BJ (cell line): ENCODE measurements at regions of chr9 and their contacts with region 1.

Region 1: DNA sequence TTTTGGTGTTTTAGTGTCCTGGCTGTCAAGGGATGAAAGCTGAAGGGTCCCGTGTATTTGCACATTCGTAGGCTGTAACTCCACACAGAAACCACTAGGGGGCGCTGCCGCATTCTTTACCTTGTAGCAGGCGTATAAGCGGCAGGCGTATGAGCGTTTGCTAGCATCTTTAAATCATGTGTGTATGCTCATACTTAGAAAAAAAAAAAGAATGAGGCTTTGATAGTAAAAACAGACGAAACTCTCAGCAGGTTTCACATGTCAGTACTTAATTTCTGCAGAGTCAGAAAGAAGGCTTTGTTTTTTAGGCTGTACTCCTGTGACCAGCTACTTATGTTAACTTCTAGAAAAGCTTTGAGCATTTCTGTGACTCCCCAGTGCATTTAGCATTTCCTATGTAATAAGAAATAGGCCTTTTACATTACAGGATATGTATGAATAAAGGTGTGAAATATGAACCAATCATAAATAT is 218.8 kb upstream of the ADAMTSL1 start:
- DNase-seq: no peak
- H3K4me3 ChIP-seq: no peak overlapping the region
- H3K27me3 ChIP-seq: no peaks in the 10 kb centered on the region
- CTCF ChIP-seq: peak; percentile 83

Region 2: GRCh38 chr9:18274693-18275092 is 19.5 kb after region 1 on chr9:
- CTCF ChIA-PET with region 1: no interaction called
- POLR2A ChIA-PET with region 1: no interaction called
- DNase-seq: no peak
- H3K4me3 ChIP-seq: no peak overlapping the region
- H3K27me3 ChIP-seq: no peaks in the 10 kb centered on the region
- CTCF ChIP-seq: no peak

Region 3: GRCh38 chr9:18393340-18394130 is 138.3 kb after region 1 on chr9:
- CTCF ChIA-PET with region 1: interaction called, 22 read pairs
- POLR2A ChIA-PET with region 1: no interaction called
- DNase-seq: peak; percentile 75
- H3K4me3 ChIP-seq: no peak overlapping the region
- H3K27me3 ChIP-seq: no peaks in the 10 kb centered on the region
- CTCF ChIP-seq: no peak

Region 4: DNA sequence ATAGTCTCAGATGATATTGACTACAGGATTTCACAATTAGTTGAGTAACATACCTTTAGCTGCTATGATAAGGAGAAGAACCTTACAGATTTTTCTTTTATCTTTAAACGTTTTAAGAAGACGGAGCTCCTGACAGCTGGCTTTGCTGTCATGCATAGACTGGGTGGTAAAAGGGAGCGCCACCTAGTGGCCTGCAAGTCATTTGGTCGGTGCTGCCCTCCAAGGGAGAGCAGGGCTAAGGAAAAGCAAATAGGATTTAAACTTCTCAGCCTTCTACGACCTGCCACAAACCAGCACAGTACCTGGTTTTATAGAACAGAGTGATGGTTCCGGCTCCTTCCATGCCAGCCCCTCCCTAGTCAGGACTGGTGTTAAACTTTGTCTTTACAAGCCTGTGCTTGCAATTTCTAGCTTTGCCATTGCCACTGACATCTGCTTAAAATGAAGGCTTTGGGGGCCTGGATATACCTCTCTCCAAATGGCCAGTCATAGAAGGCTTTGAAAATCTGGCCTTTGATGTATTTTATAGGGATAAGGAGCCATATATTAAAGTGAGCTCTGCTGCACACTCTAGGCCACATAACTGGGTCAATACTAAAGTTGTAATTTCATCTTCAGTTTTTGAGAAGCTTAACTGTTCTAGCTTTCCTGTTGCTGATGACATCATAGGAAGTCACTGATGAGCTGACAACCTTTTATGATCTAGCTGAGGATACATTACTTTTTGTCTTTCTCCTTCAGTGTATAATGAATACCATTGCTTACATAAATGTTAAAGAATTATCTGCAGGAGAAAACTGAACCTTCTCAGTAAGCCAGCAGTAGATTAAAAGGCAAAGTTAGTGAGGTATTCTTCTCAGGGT is 187.7 kb after region 1 on chr9:
- CTCF ChIA-PET with region 1: interaction called, 85 read pairs
- POLR2A ChIA-PET with region 1: no interaction called
- DNase-seq: no peak
- H3K4me3 ChIP-seq: no peak overlapping the region
- H3K27me3 ChIP-seq: no peaks in the 10 kb centered on the region
- CTCF ChIP-seq: peak; percentile 91

Region 5: GRCh38 chr9:18824095-18824666 is 569.0 kb after region 1 on chr9:
- CTCF ChIA-PET with region 1: interaction called, 14 read pairs
- POLR2A ChIA-PET with region 1: no interaction called
- DNase-seq: no peak
- H3K4me3 ChIP-seq: no peak overlapping the region
- H3K27me3 ChIP-seq: no peaks in the 10 kb centered on the region
- CTCF ChIP-seq: peak; percentile 40; the same call in 1 of the 2 replicates

Region 6: DNA sequence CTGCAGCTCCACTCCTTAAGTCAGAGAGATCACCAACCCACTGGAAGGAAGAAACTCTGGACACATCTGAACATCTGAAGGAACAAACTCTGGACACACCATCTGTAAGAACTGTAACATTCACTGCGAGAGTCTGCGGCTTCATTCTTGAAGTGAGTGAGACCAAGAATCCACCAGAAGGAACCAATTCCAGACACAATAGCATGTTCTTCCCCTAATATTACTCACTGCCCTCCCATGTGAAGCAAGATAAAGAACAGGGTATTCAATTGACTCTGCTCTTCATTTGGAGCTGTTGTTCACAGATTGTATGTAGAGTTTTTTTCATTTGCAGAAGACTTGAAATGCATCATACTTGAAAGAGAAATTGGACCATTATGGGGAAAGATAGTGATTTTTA is 767.0 kb after region 1 on chr9:
- CTCF ChIA-PET with region 1: interaction called, 16 read pairs
- POLR2A ChIA-PET with region 1: no interaction called
- DNase-seq: no peak
- H3K4me3 ChIP-seq: no peak overlapping the region
- H3K27me3 ChIP-seq: no peaks in the 10 kb centered on the region
- CTCF ChIP-seq: no peak

Region 7: DNA sequence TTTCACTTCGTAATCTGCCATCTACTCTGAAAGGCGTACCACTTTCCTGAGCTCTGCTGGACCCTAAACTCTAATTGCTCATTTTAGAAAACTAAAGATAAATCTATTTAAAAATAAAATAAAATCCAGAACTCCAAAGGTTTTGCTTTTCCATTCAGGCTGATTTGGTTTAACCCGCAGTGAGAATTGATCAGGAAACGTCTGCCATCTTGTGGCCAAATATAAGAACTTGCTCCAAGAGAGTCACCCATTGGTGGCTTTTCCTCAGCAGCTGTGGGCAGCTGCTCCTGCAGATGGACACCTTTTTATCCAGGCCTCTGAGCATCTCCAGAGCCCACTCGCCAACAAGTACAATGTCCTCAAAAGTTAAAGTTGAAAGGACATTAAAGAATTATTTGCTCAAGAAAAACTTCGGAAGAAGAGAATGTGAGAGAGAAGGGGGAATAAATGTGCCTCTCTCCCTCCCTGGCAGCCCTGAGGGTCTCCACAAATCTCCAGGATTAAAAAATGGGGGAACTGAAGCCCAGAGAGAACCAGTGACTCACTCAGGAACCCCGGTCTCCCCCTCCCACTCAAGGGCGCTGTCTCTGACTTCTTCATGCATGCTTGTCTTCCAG is 773.7 kb after region 1 on chr9:
- CTCF ChIA-PET with region 1: interaction called, 16 read pairs
- POLR2A ChIA-PET with region 1: no interaction called
- DNase-seq: no peak
- H3K4me3 ChIP-seq: no peak overlapping the region
- H3K27me3 ChIP-seq: no peaks in the 10 kb centered on the region
- CTCF ChIP-seq: peak; percentile 68